ENCODE measurements at regions of chr7 and their contacts with region 1.

Region 1: GRCh38 chr7:131540441-131541162 is 15.8 kb downstream of the PODXL start:
- DNase-seq: peak; percentile 89
- H3K4me3 ChIP-seq: no peak overlapping the region
- H3K27ac ChIP-seq: peak overlapping the region; percentile 74
- H3K4me1 ChIP-seq: peaks cover 50% of the 10 kb centered on the region
- H3K27me3 ChIP-seq: no peaks in the 10 kb centered on the region
- CTCF ChIP-seq: peak; percentile 8 to 24
- POLR2A ChIP-seq: no peak

Region 2: DNA sequence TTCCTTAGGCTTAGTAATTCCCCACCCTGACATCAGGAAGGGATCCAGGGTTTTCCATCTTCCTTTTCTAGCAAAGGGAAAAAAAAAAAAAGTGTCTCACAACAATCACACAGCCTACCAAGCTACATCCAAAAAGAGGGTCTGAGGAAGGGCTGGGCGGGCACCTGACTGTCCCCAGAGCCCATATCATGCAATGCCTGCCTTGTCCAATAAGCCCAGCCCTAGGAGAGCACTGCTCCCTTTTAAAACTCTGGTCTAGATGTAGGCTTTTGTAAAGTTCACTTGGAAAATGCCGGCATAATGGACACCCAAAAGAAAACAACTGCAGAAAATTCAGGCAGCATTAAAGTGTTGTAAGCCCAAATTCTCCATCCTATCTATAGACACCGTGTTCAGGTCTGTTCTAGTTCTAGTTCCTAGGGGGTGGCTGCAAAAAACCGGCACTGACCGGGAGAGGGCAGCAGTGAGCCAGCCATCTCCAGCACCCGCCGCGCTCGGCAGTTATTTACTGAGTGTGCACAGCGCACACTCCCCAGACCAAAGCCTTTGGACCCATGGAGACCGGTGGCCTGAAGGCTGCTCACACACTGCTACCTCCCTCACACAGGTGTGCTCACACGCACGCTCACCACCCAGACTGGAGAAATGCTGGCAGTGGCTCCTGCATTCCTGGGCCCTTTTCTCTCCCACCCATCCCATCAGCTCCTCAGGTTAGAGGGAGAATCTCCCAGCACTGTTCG is 32.8 kb before region 1 on chr7:
- CTCF ChIA-PET with region 1: interaction called, 29 read pairs
- POLR2A ChIA-PET with region 1: no interaction called
- dilution Hi-C with region 1: no loop called
- intact Hi-C with region 1: loop called (anchors 1 kb)
- DNase-seq: peak; percentile 76
- H3K4me3 ChIP-seq: no peak overlapping the region
- H3K27ac ChIP-seq: no peak overlapping the region
- H3K4me1 ChIP-seq: peaks cover 18% of the 10 kb centered on the region
- H3K27me3 ChIP-seq: no peaks in the 10 kb centered on the region
- CTCF ChIP-seq: peak; percentile 87 to 90
- POLR2A ChIP-seq: no peak

Region 3: DNA sequence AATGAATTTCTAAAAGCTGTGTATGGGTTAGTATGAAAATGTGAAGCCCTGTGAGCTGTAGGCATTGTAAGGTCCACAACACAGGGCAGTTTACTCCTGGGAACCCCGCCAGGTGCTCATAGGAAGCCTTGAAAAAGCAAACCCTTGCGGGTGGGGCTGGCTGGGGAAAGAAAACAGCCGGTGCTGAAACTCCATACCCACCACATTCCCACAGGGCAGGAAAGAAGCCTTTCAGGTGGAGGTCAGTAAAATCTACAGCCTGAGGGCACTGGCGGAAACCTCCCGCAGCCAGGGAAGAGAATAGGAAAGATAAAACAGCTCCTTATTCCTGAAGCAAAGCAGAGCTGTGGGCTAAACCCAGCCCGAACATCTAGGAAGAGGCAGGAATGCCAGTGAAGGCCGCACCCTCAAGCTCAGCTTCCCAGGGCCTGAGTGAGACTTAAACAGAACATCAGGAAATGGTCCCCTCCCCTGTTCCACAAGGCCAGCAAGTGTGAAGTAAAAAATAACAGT is 18.9 kb before region 1 on chr7:
- CTCF ChIA-PET with region 1: interaction called, 8 read pairs
- POLR2A ChIA-PET with region 1: no interaction called
- dilution Hi-C with region 1: no loop called
- intact Hi-C with region 1: loop called (anchors 1 kb)
- DNase-seq: peak; percentile 78
- H3K4me3 ChIP-seq: no peak overlapping the region
- H3K27ac ChIP-seq: peak overlapping the region; percentile 18
- H3K4me1 ChIP-seq: peaks cover 41% of the 10 kb centered on the region
- H3K27me3 ChIP-seq: no peaks in the 10 kb centered on the region
- CTCF ChIP-seq: no peak
- POLR2A ChIP-seq: no peak

Region 4: GRCh38 chr7:131604841-131605279 is 64.3 kb after region 1 on chr7:
- CTCF ChIA-PET with region 1: no interaction called
- POLR2A ChIA-PET with region 1: no interaction called
- dilution Hi-C with region 1: no loop called
- intact Hi-C with region 1: no loop called
- DNase-seq: no peak
- H3K4me3 ChIP-seq: no peak overlapping the region
- H3K27ac ChIP-seq: no peak overlapping the region
- H3K4me1 ChIP-seq: no peaks in the 10 kb centered on the region
- H3K27me3 ChIP-seq: peaks cover 0 to 7% of the 10 kb centered on the region in 2 experiments
- CTCF ChIP-seq: no peak
- POLR2A ChIP-seq: no peak

Measured in endothelial cell of umbilical vein (primary cell).